Activated T-helper 1 cell treated with anti-CD3 and anti-CD28 coated beads, Interleukin-12 subunit alpha, Interleukin-12 subunit beta, Interleukin-2, Interleukin-4 antibody, amounts not matched to agents 30 ng/mL and 10 ng/mL and 1 ng/mL, durations not matched to agents 14 hours and 24 hours and 36 hours (primary cell): ENCODE measurements at regions of chrX and their contacts with region 1.

Region 1: DNA sequence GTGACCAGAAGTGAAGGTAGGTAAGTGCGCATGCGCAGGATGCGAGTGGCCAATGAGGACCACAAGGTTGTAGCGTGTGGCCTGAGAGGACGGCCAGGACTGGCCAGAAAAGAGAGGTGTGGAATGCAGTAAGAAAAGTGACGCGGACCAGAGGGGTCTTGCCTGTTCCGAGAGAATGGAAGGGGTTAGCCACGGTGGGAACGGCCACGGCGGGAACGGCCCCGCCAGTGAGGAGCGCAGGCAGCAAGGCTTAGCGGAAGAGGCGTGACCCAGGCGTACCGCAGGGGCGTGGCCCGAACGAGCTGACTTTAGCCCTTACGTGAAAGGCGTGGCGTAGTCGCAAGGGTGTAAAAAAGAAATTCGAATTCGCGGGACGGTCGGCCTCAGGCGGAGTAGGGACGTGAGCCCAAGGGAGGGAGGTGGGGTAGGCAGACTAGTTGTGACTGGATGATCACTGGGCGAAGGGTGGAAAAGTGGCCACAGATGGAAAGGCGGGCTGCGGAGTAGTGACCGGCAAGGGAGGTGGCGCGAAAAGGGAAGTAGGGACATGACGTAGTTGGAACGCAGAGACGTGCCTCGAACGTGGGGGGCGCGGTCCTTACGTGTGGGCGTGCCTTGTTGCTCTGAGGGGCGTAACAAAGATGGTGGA is 10.4 kb upstream of the CLTRN start:
- DNase-seq: peak; percentile 79
- H3K4me3 Mint-ChIP-seq: no peak overlapping the region
- H3K27ac Mint-ChIP-seq: no peak overlapping the region
- H3K4me1 Mint-ChIP-seq: peaks cover 8% of the 10 kb centered on the region
- H3K27me3 Mint-ChIP-seq: peaks cover 2% of the 10 kb centered on the region

Region 2: GRCh38 chrX:14591976-14592375 is 1083.0 kb before region 1 on chrX:
- intact Hi-C with region 1: no loop called
- DNase-seq: no peak
- H3K4me3 Mint-ChIP-seq: no peak overlapping the region
- H3K27ac Mint-ChIP-seq: no peak overlapping the region
- H3K4me1 Mint-ChIP-seq: no peaks in the 10 kb centered on the region
- H3K27me3 Mint-ChIP-seq: no peaks in the 10 kb centered on the region

Region 3: GRCh38 chrX:15493118-15493962 is 181.6 kb before region 1 on chrX and contains the start of gene PIR:
- intact Hi-C with region 1: loop called (anchors 1 kb)
- DNase-seq: peak; percentile 54
- H3K4me3 Mint-ChIP-seq: peak within 1 kb of the TSS; percentile 86
- H3K27ac Mint-ChIP-seq: peak within 1 kb of the TSS; percentile 65
- H3K4me1 Mint-ChIP-seq: peaks cover 21% of the 10 kb centered on the region
- H3K27me3 Mint-ChIP-seq: peaks cover 6% of the 10 kb centered on the region
- total RNA-seq, gene PIR: 4.3 and 4.9 TPM in 2 replicates

Region 4: DNA sequence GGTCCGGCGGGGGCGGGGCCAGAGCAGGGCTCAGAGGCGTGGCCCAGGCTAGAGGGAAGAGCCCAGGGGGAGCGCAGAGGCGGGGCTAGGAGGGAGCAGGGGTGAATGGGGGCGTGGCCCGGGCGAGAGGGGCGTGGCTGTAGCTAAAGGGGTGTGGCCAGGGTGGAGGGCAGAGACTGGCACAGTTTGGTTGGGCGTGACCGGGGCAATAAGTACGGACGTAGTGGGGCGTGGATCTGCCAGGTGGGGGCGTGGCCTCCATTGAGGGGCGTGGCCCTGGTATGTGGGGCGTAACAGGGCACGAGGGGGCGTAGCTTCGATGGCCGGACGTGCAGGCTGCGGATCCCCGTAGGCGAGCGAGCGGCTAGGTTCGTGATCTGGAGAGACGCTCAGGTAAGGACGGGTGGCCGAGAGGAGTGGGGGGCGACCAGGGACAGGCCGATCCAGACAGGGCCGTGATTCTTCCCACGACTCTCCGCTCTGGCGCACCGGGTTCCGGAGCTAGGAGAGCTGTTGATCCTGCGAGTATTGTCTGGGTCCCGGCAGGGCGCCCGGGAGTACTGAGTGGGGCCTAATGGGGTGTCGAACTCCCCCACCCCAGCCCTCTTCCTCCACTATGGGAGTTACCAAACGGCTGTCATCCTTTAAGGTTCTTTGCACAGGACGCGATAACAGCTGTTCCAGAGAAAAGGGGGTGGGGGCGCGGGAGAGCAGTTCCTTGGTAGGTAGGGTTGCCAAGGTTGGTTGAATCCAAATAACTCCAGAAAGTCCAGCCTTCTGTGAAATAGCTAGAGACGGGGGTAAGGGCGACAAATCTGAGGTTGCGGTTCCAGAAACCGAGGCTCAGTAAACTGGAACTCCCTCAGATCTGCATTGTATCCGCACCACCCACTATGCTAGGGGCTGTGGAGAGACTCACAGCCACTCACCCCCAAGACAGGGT is 63.3 kb after region 1 on chrX and contains the start of gene CA5B:
- intact Hi-C with region 1: loop called (anchors 1 kb)
- DNase-seq: peak; percentile 93
- H3K4me3 Mint-ChIP-seq: peak within 1 kb of the TSS; percentile 86
- H3K27ac Mint-ChIP-seq: peak within 1 kb of the TSS; percentile 77
- H3K4me1 Mint-ChIP-seq: peaks cover 20% of the 10 kb centered on the region
- H3K27me3 Mint-ChIP-seq: no peaks in the 10 kb centered on the region
- total RNA-seq, gene CA5B: 3.8 and 6.9 TPM in 2 replicates

Region 5: GRCh38 chrX:15781961-15782699 is 107.2 kb after region 1 on chrX:
- intact Hi-C with region 1: loop called (anchors 2 kb)
- DNase-seq: no peak
- H3K4me3 Mint-ChIP-seq: peak overlapping the region; percentile 84
- H3K27ac Mint-ChIP-seq: peak overlapping the region; percentile 95
- H3K4me1 Mint-ChIP-seq: peaks cover 10% of the 10 kb centered on the region
- H3K27me3 Mint-ChIP-seq: no peaks in the 10 kb centered on the region

Region 6: DNA sequence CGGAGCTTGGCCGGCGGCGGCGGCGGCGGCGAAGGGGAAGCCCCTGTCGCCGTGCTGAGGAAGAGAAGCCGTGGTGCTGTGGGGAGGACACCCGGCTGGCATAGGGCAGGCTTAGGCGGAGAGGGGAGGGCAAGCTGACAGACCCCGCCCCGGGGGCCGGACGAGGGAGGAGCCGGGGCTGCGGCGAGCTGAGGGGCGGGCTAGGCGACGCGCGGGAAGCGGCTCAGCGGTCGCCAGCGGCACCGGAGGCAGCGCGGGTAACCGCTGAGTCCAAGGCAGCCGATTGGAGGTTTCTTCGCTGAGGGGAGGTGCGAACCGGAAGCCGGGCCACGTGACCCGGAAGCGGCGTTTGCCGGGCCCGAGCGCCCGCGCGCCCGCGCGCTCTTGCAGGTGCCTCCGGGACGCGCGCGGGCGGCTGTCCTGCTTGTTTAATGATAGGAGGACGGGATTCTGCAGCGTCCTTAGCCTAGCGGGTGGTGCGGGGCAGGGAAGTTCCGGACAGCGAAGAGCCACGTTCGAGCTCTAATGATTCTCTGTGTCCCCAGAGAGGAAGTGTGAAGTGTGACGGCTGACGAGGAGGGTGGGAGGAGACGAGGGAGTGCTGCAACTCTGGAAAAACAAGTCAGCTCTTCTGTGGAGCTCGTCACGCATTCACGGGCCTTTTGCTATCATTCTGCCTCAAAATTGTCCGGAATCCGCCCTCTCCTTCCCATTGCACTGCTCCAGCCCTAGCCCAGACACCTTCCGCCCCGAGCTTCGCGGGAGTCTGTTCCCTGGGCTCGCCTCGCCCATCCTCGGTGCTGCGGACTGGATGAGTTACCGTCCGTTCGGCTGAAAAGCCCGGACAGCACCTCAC is 180.0 kb after region 1 on chrX and contains the start of gene AP1S2:
- intact Hi-C with region 1: loop called (anchors 1 kb)
- DNase-seq: peak; percentile 89
- H3K4me3 Mint-ChIP-seq: peak within 1 kb of the TSS; percentile 88
- H3K27ac Mint-ChIP-seq: peak within 1 kb of the TSS; percentile 90
- H3K4me1 Mint-ChIP-seq: peaks cover 10% of the 10 kb centered on the region
- H3K27me3 Mint-ChIP-seq: no peaks in the 10 kb centered on the region
- total RNA-seq, gene AP1S2: 20.7 and 35.3 TPM in 2 replicates

Region 7: GRCh38 chrX:16870095-16870860 is 1195.3 kb after region 1 on chrX and contains the start of gene RBBP7:
- intact Hi-C with region 1: loop called (anchors 1 kb)
- DNase-seq: peak; percentile 88
- H3K4me3 Mint-ChIP-seq: peak within 1 kb of the TSS; percentile 97
- H3K27ac Mint-ChIP-seq: peak within 1 kb of the TSS; percentile 96
- H3K4me1 Mint-ChIP-seq: peaks cover 20% of the 10 kb centered on the region
- H3K27me3 Mint-ChIP-seq: peaks cover 8% of the 10 kb centered on the region
- total RNA-seq, gene RBBP7: 127 and 134 TPM in 2 replicates